Ascending aorta (tissue), 2 donors: ENCODE measurements at regions of chr20 and their contacts with region 1.

Region 1: DNA sequence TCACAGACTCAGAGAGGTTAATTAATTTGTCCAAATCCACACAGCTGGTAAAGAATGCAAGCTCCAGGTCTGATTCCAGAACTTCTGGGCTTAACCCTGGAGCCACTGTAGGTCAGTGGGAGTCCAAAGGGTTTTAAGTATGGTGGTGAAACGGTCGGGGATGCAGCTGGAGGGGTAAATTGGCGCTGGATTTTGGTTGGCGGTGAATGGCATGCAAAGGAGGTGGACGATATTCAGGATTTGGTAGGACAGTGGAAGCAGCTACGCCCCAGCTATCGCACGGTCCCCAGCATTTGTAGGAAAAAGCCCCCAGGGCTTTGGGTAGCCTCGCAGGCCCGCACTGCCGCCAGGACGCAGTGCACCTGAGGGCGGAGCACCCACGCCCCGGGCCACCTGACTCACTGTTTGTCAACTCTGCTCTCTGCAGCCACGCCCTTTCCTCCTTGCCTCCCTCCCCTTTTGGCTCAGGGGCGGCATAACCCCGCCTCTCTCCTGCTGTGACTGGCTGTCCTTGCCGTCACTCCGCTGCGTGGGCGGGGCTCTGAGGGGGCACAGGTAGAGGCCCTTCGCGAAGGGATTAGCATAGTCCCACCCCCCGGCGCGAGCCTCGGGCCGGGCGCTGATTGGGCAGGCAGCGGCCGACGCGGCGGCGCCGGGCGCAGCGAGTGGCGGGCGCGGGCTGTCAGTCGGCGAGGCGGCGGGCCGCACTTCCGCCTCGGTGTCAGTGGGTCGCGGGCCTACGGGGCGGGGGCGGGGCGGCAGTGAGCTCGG is at the start of gene OSBPL2:
- DNase-seq: peak; percentile 97 to 99
- H3K4me3 ChIP-seq: peak within 1 kb of the TSS; percentile 86 to 96
- H3K27ac ChIP-seq: peak within 1 kb of the TSS; percentile 88 to 95
- H3K4me1 ChIP-seq: peaks cover 2 to 7% of the 10 kb centered on the region in 2 donors
- H3K27me3 ChIP-seq: no peaks in the 10 kb centered on the region
- CTCF ChIP-seq: no peak
- total RNA-seq, gene OSBPL2: 25.0 TPM

Region 2: DNA sequence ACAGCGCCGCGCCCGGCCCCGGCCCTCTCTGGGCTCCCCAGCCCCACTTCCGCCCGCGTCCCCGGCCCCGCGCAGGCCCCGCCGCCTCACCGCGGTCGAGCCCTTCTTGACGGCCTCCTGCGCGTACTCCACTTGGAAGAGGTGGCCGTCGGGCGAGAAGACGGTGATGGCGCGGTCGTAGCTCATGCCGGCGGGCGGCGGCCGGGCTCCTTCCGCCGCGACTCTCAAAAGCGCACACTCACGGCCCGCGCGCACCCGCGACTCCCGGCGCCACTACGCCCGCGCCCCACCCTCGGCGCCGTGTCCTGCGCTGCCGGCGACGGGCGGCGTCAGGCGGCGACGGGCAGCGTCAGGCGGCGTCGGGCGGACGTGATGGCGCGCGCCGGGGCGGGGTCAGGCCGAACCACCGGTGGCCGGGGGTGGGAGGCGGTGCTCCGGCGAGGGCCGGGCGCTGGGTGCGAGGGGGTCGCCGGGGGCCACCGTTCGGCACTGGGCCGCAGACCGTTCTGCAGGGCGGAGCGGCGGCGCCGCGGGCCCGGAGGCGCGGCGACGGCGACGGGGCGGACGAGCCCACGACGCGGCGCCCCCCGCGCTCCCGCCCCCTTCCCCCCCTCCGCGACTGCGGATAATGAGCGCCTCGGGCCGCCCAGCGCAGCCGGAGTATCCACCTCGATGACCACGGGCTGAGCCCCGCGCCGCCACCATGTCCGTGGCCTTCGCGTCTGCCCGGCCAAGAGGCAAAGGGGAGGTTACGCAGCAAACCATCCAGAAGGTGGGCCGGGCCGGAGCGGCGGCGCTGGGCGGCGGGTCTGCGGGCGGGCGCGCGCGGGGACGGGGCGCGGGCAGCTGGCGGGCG is 94.6 kb before region 1 on chr20 and contains the starts of genes PSMA7 and SS18L1:
- intact Hi-C with region 1: loop called (anchors 2 kb)
- DNase-seq: peak in 1 of 2 donors; percentile 91
- H3K4me3 ChIP-seq: peak within 1 kb of the TSS; percentile 91 to 99
- H3K27ac ChIP-seq: peak within 1 kb of the TSS; percentile 92 to 97
- H3K4me1 ChIP-seq: peaks cover 9 to 31% of the 10 kb centered on the region in 2 donors
- H3K27me3 ChIP-seq: no peaks in the 10 kb centered on the region
- CTCF ChIP-seq: peak in 1 of 3 experiments; percentile 6
- total RNA-seq, gene PSMA7: 301 TPM
- total RNA-seq, gene SS18L1: 39.8 TPM

Region 3: GRCh38 chr20:62292108-62292507 is 54.1 kb after region 1 on chr20:
- intact Hi-C with region 1: no loop called
- DNase-seq: no peak
- H3K4me3 ChIP-seq: no peak overlapping the region
- H3K27ac ChIP-seq: no peak overlapping the region
- H3K4me1 ChIP-seq: no peaks in the 10 kb centered on the region
- H3K27me3 ChIP-seq: no peaks in the 10 kb centered on the region
- CTCF ChIP-seq: no peak

Region 4: GRCh38 chr20:62302341-62303058 is 64.5 kb after region 1 on chr20 and contains the start of gene ADRM1:
- intact Hi-C with region 1: loop called (anchors 1 kb)
- DNase-seq: peak; percentile 82 to 98
- H3K4me3 ChIP-seq: peak within 1 kb of the TSS; percentile 70 to 92
- H3K27ac ChIP-seq: peak within 1 kb of the TSS; percentile 98 to 99
- H3K4me1 ChIP-seq: peaks cover 12 to 20% of the 10 kb centered on the region in 2 donors
- H3K27me3 ChIP-seq: no peaks in the 10 kb centered on the region
- CTCF ChIP-seq: peak; percentile 98 to 99 (median 99)
- total RNA-seq, gene ADRM1: 236 TPM

Region 5: DNA sequence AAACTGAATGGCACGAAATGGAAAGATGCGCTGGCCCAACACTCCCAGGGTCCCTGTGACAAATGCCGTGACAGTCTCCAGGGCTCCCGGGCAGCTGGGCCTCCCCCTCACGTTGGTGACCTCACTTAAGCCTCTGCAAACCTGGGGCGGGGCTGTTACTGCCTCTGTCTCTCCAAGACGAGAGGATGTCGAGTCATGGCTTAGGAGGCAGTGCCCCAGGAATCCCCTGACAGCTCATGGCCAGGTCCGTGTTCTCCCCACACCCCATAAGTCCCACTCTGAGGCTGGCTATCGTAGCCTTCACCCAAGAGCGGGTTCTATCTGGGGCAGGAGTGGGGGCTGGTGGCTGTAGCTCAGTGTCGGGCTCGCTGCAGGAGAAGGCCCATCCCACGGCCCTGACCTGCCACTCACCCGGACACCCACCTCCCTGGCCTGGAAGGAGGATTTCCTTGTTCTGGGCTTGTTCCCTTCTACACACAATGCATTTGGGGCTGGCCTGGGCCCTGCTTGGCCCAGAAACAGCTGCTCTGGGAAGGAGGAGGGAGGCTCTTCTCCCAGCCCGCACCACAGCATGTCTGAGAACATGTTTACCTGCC is 143.3 kb after region 1 on chr20:
- intact Hi-C with region 1: no loop called
- DNase-seq: no peak
- H3K4me3 ChIP-seq: no peak overlapping the region
- H3K27ac ChIP-seq: peak overlapping the region in 1 of 2 donors; percentile 47
- H3K4me1 ChIP-seq: peaks cover 18 to 29% of the 10 kb centered on the region in 2 donors
- H3K27me3 ChIP-seq: no peaks in the 10 kb centered on the region
- CTCF ChIP-seq: no peak

Region 6: GRCh38 chr20:62407221-62407992 is 169.4 kb after region 1 on chr20 and contains the start of gene CABLES2:
- intact Hi-C with region 1: loop called (anchors 5 kb)
- DNase-seq: peak; percentile 87 to 96
- H3K4me3 ChIP-seq: peak within 1 kb of the TSS; percentile 69 to 81
- H3K27ac ChIP-seq: peak within 1 kb of the TSS; percentile 48 to 72
- H3K4me1 ChIP-seq: peaks cover 10 to 24% of the 10 kb centered on the region in 2 donors
- H3K27me3 ChIP-seq: no peaks in the 10 kb centered on the region
- CTCF ChIP-seq: peak in 1 of 3 experiments; percentile 25
- total RNA-seq, gene CABLES2: 0.43 TPM